ENCODE measurements at regions of chr3 and their contacts with region 1.

Region 1: DNA sequence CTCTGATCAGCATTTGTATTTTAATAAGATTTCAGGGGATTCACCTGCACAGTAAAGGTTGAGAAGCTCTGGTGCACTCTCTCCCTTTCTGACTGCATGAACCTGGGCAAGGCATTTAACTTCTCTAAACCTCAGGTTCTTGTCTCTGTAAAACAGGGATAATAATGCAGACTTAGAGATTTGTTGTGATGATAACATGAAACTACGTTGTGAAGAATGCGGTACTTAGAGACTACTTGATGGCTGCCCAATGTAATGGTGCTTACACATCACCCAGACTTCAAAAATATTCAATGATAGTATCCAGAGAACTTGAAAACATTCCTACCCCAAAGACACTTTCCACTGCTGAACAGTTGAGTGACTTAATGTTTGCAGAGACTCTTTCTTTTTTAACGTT is 19.8 kb upstream of the TNFSF10 start:
- DNase-seq: no peak
- ATAC-seq: no peak
- H3K4me3 ChIP-seq: no peak overlapping the region
- H3K4me3 Mint-ChIP-seq: no peak overlapping the region
- H3K27ac ChIP-seq: no peak overlapping the region
- H3K27ac Mint-ChIP-seq: no peak overlapping the region
- H3K4me1 ChIP-seq: peaks cover 12% of the 10 kb centered on the region
- H3K4me1 Mint-ChIP-seq: peaks cover 14% of the 10 kb centered on the region
- H3K27me3 ChIP-seq: no peaks in the 10 kb centered on the region
- H3K27me3 Mint-ChIP-seq: no peaks in the 10 kb centered on the region
- CTCF ChIP-seq: no peak

Region 2: DNA sequence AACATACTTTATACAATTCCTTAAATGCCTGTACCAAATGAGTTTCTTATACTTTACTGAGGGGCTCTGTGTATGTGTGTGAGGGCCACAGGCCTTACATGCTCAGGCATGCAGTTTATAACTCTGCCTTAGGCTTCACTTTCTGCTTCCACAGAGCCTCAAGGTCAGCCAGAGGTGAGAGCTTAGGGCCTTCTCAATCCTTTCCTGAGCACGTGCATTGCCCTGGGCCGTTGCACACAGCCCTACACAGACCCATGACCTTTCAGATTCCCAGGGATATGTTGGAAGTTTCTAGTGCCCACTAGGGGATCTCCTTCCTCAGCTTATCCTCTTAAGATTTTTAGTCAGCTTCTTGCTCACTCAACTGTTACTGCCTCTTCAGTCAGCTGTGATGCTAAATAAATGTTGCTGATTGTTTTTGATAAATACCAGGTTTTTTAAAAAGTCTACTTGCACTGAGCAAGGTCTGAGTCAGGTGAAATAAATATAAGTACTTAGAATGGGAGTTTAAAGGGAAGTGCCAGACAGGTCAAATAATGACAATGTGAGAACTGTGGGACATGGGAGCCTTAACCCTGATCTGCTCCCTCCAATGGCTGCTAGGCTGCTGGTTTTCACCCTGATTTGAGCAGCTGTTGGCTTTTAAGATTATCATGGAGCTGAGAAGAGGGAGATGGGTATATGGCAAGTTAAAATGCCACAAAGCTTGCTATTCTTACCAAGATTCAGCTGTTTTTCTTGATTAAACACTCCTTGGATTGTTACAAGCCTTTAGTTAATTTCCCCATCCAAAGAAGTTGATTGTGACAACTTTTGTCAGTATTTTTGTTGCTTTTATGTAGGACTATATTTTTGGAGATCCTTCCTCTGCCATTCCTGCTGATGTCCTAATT is 902.2 kb before region 1 on chr3:
- CTCF ChIA-PET with region 1: no interaction called
- POLR2A ChIA-PET with region 1: no interaction called
- intact Hi-C with region 1: no loop called
- DNase-seq: no peak
- ATAC-seq: no peak
- H3K4me3 ChIP-seq: no peak overlapping the region
- H3K4me3 Mint-ChIP-seq: no peak overlapping the region
- H3K27ac ChIP-seq: no peak overlapping the region
- H3K27ac Mint-ChIP-seq: no peak overlapping the region
- H3K4me1 ChIP-seq: no peaks in the 10 kb centered on the region
- H3K4me1 Mint-ChIP-seq: no peaks in the 10 kb centered on the region
- H3K27me3 ChIP-seq: no peaks in the 10 kb centered on the region
- H3K27me3 Mint-ChIP-seq: no peaks in the 10 kb centered on the region
- CTCF ChIP-seq: no peak

Region 3: DNA sequence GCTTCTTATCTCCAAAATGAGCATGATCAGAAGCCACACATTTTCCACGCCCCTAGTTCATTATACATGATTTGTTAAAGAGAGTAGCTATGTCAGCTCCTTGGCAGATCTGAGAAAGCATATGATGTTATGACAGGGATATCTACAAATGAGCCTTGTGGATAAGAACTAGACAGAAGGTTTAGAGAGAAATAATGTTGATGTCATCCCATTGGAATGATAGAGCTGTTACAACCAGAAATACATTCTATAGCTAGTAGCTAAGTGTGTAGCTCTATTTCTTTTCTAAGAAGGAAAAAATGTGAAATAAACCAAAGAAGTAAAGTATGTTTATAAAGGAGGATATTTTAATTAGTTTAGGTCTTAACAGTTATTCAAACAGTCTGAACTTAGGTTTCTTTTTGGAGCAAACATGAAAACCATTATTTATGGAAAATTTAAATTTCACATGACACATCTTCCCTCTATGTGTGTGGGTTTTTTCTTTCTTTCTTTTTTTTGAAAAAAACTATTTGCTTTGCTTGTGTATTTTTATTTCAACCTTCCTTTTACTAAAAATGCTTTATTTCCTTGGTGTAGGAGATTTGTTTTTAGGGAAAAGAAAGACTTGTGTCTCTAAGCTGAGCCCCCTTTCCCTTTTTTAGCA is 262.5 kb before region 1 on chr3:
- CTCF ChIA-PET with region 1: no interaction called
- POLR2A ChIA-PET with region 1: no interaction called
- intact Hi-C with region 1: no loop called
- DNase-seq: no peak
- ATAC-seq: no peak
- H3K4me3 ChIP-seq: no peak overlapping the region
- H3K4me3 Mint-ChIP-seq: no peak overlapping the region
- H3K27ac ChIP-seq: no peak overlapping the region
- H3K27ac Mint-ChIP-seq: no peak overlapping the region
- H3K4me1 ChIP-seq: no peaks in the 10 kb centered on the region
- H3K4me1 Mint-ChIP-seq: no peaks in the 10 kb centered on the region
- H3K27me3 ChIP-seq: no peaks in the 10 kb centered on the region
- H3K27me3 Mint-ChIP-seq: no peaks in the 10 kb centered on the region
- CTCF ChIP-seq: no peak

Region 4: DNA sequence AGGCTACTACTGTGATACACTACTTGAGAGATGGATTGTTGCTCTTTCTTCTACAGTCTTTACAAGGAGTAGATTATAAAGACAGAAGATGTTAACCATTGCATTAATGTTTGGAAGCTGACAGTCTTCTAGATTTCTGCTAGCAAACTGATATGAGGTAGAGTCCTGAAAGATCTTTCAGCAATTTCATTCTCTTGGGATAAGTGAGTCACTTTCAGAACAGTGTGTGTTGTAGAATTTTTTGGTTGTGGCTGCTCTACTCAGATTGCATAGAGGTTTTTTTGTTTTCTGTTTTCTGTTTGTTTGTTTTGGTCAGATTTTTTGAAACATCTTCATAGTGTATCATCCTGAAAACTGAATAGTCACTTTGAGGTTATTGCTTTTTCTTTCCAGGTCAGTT is 36.9 kb before region 1 on chr3:
- CTCF ChIA-PET with region 1: no interaction called
- POLR2A ChIA-PET with region 1: no interaction called
- intact Hi-C with region 1: loop called in 1 of 2 experiments (anchors 5 kb)
- DNase-seq: no peak
- ATAC-seq: no peak
- H3K4me3 ChIP-seq: no peak overlapping the region
- H3K4me3 Mint-ChIP-seq: no peak overlapping the region
- H3K27ac ChIP-seq: no peak overlapping the region
- H3K27ac Mint-ChIP-seq: peak overlapping the region; percentile 16
- H3K4me1 ChIP-seq: no peaks in the 10 kb centered on the region
- H3K4me1 Mint-ChIP-seq: peaks cover 3% of the 10 kb centered on the region
- H3K27me3 ChIP-seq: no peaks in the 10 kb centered on the region
- H3K27me3 Mint-ChIP-seq: no peaks in the 10 kb centered on the region
- CTCF ChIP-seq: no peak

Measured in CD8-positive, alpha-beta T cell (primary cell).